Activated T-helper 2 cell treated with anti-CD3 and anti-CD28 coated beads, Interferon-gamma antibody, Interleukin-2, Interleukin-4, amounts not matched to agents 10 μg/mL and 5 μg/mL and 100 μg/mL, durations not matched to agents 14 hours and 24 hours and 36 hours (primary cell): ENCODE measurements at regions of chr11 and their contacts with region 1.

Region 1: DNA sequence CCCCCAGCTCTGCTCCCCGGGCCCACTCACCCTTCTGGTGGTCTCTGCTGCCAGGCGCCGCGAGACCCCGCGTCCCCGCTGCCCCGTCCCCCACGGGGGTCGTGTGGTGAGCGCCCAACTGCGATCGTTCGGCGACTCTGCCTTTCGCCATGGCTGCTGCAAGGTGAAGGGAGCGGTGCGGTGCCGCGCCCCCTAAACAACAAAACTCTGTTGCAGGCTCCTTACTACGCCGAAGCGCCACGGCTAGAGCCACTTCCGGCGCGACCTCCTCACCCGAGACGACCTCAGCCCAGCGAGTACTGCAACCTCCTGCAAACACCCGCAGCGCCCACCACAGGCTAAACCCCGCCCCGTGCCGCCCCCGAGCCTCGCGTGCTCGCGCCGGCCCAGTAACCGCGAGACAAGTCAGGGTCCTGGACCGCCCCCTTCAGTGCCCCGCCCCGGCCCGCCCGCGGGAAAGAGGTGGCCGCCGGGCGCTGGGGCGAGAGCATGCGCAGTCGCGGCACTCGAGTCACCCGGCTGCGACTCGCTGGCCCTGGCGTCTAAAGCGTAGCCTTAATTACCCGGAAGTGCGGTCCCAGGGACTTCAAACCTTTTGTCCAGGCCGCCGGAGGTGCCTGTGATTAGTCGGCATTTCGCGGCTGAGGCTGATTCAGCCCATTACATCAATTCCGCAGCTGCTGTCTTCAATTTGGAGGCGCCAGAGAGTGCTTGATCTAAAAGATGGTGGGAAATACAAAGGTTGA is at the start of gene TMEM41B:
- DNase-seq: peak; percentile 99
- H3K4me3 Mint-ChIP-seq: peak within 1 kb of the TSS; percentile 96
- H3K27ac Mint-ChIP-seq: peak within 1 kb of the TSS; percentile 97
- H3K4me1 Mint-ChIP-seq: peaks cover 27% of the 10 kb centered on the region
- H3K27me3 Mint-ChIP-seq: peaks cover 20% of the 10 kb centered on the region
- total RNA-seq, gene TMEM41B: 29.8 and 31.9 TPM in 2 replicates

Region 2: GRCh38 chr11:9280655-9281301 is 33.7 kb before region 1 on chr11:
- intact Hi-C with region 1: loop called (anchors 1 kb)
- DNase-seq: peak; percentile 71
- H3K4me3 Mint-ChIP-seq: peak overlapping the region; percentile 56
- H3K27ac Mint-ChIP-seq: peak overlapping the region; percentile 40
- H3K4me1 Mint-ChIP-seq: peaks cover 17% of the 10 kb centered on the region
- H3K27me3 Mint-ChIP-seq: no peaks in the 10 kb centered on the region

Region 3: DNA sequence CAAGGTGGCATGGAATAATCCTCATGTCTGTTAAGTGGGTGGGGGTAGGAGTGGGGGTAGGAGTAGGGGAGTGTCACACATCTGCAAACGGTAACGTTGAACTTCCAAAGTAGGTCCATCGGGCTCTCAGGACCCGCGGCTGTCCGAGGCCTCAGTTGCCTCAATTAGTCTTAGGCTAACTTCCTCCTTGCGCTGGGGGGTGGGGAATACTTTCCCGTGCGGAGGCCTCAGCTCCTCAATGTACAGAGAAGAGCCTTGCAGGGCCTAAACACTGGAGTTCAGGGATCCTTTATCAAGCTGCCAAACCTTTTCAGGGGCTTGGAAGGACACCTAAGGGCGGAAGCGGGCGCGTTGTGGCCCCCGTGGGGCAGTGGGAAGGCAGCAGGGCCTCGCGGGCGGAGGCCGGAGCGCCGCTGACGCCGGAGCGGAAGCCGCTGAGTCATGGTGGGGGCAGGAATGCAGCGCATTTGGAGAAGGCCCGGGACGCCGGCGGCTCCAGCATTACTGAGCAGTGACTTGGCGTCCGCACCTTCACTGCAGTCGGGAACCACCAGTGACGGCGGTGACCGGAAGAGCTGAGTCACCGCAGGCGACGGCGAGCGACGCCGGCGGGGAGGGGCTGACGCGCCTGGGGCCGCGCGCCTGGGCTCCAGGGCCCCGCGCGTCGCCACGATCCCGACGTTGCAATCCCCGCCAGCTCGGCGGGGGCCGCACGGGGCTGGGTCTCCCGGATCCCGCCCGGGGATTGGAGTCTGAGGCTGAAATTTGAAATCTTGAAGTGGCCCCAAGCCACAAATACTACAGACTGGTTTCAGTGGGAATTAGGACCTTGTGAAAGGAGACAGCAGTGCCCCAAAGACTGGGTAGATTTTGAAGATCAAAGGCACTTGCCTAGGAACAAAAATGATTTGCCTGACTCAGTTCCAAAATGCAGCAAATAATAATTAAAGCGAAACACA is 49.8 kb after region 1 on chr11:
- intact Hi-C with region 1: loop called (anchors 1 kb)
- DNase-seq: peak; percentile 72
- H3K4me3 Mint-ChIP-seq: peak overlapping the region; percentile 73
- H3K27ac Mint-ChIP-seq: peak overlapping the region; percentile 84
- H3K4me1 Mint-ChIP-seq: peaks cover 27% of the 10 kb centered on the region
- H3K27me3 Mint-ChIP-seq: no peaks in the 10 kb centered on the region

Region 4: GRCh38 chr11:9384535-9385303 is 70.3 kb after region 1 on chr11 and contains the start of gene IPO7:
- intact Hi-C with region 1: loop called (anchors 2 kb)
- DNase-seq: peak; percentile 87
- H3K4me3 Mint-ChIP-seq: peak within 1 kb of the TSS; percentile 93
- H3K27ac Mint-ChIP-seq: peak within 1 kb of the TSS; percentile 92
- H3K4me1 Mint-ChIP-seq: peaks cover 21% of the 10 kb centered on the region
- H3K27me3 Mint-ChIP-seq: no peaks in the 10 kb centered on the region
- total RNA-seq, gene IPO7: 143 and 155 TPM in 2 replicates